KBM-7 (cell line): ENCODE measurements at regions of chr17 and their contacts with region 1.

Region 1: DNA sequence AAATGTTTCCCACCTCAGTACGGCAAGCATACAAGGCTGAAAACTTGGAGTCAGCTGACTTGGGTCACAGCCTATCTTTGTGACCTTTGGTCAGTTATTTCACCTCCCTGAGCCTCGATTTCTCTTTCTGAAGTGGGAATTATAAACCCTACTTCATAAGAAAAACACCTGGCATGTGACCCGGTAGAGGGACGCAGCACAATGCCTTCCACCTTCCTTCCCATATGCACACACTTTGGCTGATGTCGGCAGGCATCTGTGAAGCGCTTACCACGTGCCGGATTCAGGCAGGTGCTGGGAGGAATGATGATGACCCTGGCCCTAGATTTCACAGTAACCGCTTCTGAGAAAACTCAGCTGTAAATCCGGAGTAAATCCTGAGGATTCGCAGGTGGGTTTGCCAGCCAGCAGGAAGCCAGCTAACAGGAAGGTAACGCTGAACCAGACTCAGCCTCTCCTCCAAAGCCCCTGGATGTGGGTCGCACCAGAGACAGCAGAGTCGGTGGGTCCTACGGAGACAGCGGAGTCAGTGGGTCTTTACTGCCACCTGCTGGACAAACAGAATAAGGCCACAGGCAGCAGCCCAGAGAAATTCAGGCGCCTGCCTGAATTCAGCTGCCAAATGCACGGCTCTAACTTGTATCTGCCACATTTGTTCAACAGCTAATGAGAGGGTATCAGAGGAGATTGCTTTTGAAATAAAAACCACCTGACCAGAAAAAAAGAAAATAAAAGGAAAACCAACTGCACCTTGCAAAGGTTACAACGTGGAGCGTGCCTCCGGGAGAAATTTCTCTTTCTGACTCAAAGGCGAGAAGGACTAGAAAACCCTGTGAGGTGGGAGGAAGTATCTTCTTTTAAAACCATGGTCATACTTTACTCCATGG is 16.6 kb downstream of the COPRS start:
- DNase-seq: peak; percentile 78

Region 2: DNA sequence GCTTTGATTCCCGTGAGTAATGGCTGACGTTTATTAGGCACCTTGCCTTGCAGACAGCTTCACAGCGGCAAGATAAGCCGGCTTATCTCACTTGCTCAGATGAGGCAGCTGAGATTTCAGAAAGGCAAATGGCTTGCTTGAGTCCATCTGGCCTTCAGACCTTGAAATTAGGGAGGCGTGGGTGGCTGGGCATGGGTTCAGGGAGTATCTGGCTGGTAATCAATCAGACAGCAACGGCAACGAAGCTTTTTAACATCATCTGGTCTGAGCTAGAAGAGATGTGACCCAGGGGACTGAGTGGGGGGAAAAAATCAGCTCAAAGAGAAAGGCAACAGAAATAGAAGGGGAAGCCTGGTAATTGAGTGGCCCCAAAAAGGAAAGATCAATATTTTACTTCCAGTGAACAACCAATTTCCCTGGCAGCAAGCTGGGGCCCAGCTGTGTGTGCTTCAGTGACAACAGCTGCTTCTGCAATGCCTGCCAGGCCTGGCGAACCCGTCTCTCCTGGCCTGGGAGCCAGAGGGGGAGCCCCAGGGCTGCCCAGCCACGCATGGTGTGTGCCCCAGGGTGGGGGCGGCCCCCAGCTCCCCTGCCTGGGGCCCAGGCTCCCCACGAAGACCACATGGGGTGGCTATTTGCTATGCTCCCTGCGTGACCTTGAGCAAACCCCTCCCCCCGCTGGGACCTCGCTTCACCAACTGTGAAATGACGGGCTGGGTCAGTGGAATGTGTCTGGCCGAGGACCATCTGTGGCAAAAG is 417.0 kb before region 1 on chr17:
- in situ Hi-C with region 1: loop called (anchors 25 kb)
- DNase-seq: peak; percentile 41

Region 3: GRCh38 chr17:31533546-31534155 is 308.8 kb before region 1 on chr17:
- in situ Hi-C with region 1: loop called (anchors 10 kb)
- DNase-seq: peak; percentile 45